ENCODE measurements at regions of chr6 and their contacts with region 1.

Region 1: GRCh38 chr6:33477864-33478263 is 23.5 kb downstream of the ZBTB9 start:
- DNase-seq: no peak
- ATAC-seq: no peak
- H3K4me3 ChIP-seq: no peak overlapping the region
- H3K27ac ChIP-seq: no peak overlapping the region
- H3K4me1 ChIP-seq: no peaks in the 10 kb centered on the region
- H3K27me3 ChIP-seq: peaks cover 3% of the 10 kb centered on the region; the same call in 1 of the 2 replicates
- CTCF ChIP-seq: no peak

Region 2: GRCh38 chr6:33112148-33112547 is 365.7 kb before region 1 on chr6:
- CTCF ChIA-PET with region 1: no interaction called
- POLR2A ChIA-PET with region 1: no interaction called
- in situ Hi-C with region 1: no loop called
- intact Hi-C with region 1: no loop called
- DNase-seq: no peak
- ATAC-seq: peak; percentile 79
- H3K4me3 ChIP-seq: no peak overlapping the region
- H3K27ac ChIP-seq: no peak overlapping the region
- H3K4me1 ChIP-seq: peaks cover 5% of the 10 kb centered on the region; the same call in 1 of the 2 replicates
- H3K27me3 ChIP-seq: peaks cover 35% of the 10 kb centered on the region
- CTCF ChIP-seq: no peak

Region 3: DNA sequence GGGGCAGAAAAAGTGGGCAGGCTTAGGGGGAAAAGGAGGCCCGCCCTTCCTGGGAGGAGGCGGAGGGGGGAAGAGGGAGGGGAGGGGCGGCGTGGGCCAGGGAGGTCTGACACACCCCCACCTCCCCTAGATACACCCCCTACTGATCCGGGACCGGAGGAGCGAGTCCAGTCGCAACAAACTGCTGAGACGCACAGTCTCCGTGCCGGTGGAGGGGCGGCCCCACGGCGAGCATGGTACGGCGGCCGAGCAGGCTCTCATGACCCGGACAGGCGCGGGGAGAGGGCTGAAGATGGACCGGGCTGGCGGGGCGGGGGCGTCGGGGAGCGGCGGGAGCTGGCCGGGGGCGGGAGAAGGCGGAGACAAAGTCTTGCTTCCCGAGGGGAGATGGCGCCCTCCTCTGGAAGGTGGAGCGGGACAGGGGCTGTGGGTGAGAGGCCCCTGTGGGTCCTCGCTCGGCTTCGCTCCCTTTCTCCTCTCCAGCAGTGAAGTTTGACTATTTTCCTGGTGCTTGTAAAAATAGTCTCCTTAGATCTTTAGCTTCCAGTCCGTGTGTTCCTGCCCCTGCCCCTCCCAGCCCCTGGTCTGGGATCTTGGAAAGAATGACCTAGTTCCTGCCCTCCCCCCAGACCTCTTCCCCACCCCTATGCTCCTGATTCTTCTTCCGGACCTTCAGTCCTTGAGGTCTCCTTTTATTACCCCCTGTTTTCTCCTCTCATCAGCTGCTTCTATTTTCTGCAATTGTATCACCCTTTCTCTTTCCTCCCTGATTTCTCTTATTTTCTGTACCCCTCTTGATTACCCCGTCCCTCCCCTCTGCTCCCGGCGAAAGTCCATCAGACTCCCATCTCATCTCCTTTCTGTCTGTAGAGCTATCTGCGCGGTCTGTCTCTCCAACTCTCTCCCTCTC is 51.9 kb before region 1 on chr6:
- CTCF ChIA-PET with region 1: no interaction called
- POLR2A ChIA-PET with region 1: interaction called, 11 read pairs
- in situ Hi-C with region 1: no loop called
- intact Hi-C with region 1: no loop called
- DNase-seq: no peak
- ATAC-seq: peak; percentile 83
- H3K4me3 ChIP-seq: peak overlapping the region; percentile 46 to 91
- H3K27ac ChIP-seq: peak overlapping the region; percentile 81
- H3K4me1 ChIP-seq: peaks cover 29% of the 10 kb centered on the region
- H3K27me3 ChIP-seq: no peaks in the 10 kb centered on the region
- CTCF ChIP-seq: peak; percentile 88